Mammary epithelial cell (primary cell): ENCODE measurements at regions of chr3 and their contacts with region 1.

Region 1: GRCh38 chr3:180416111-180416594 is 185.8 kb upstream of the TTC14 start:
- DNase-seq: peak; percentile 92
- H3K4me3 ChIP-seq: no peak overlapping the region
- H3K27ac ChIP-seq: peak overlapping the region; percentile 89
- H3K4me1 ChIP-seq: peaks cover 52% of the 10 kb centered on the region
- H3K27me3 ChIP-seq: no peaks in the 10 kb centered on the region
- CTCF ChIP-seq: no peak

Region 2: DNA sequence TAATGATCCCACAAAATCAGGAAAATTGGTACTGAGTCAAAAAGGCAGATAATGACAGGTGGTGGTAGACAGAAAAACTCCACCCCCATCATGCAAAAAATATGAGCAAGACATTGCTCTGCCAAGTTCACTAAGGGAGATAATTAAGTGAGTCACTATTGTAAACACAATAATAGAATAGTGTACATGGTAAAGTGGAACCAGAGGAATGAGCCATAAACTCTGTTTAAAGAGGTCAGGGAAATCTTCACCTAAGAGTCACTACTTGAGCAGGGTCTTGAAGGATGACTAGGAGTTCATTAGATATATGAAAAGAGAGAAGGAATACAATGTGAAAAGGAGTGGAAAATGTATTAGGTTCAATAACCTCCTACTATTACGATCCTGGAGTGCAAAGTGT is 166.0 kb before region 1 on chr3:
- CTCF ChIA-PET with region 1: no interaction called
- dilution Hi-C with region 1: no loop called
- in situ Hi-C with region 1: no loop called
- intact Hi-C with region 1: loop called (anchors 10 kb)
- DNase-seq: peak; percentile 79
- H3K4me3 ChIP-seq: no peak overlapping the region
- H3K27ac ChIP-seq: no peak overlapping the region
- H3K4me1 ChIP-seq: peaks cover 48% of the 10 kb centered on the region
- H3K27me3 ChIP-seq: no peaks in the 10 kb centered on the region
- CTCF ChIP-seq: no peak

Region 3: GRCh38 chr3:180362081-180362480 is 54.1 kb before region 1 on chr3:
- CTCF ChIA-PET with region 1: no interaction called
- dilution Hi-C with region 1: loop called (anchors 5 kb)
- in situ Hi-C with region 1: no loop called
- intact Hi-C with region 1: no loop called
- DNase-seq: no peak
- H3K4me3 ChIP-seq: no peak overlapping the region
- H3K27ac ChIP-seq: no peak overlapping the region
- H3K4me1 ChIP-seq: peaks cover 13% of the 10 kb centered on the region
- H3K27me3 ChIP-seq: no peaks in the 10 kb centered on the region
- CTCF ChIP-seq: no peak

Region 4: GRCh38 chr3:180383332-180384020 is 32.7 kb before region 1 on chr3:
- CTCF ChIA-PET with region 1: no interaction called
- dilution Hi-C with region 1: no loop called
- in situ Hi-C with region 1: no loop called
- intact Hi-C with region 1: no loop called
- DNase-seq: peak; percentile 52
- H3K4me3 ChIP-seq: no peak overlapping the region
- H3K27ac ChIP-seq: peak overlapping the region; percentile 46
- H3K4me1 ChIP-seq: peaks cover 25% of the 10 kb centered on the region
- H3K27me3 ChIP-seq: no peaks in the 10 kb centered on the region
- CTCF ChIP-seq: no peak

Region 5: DNA sequence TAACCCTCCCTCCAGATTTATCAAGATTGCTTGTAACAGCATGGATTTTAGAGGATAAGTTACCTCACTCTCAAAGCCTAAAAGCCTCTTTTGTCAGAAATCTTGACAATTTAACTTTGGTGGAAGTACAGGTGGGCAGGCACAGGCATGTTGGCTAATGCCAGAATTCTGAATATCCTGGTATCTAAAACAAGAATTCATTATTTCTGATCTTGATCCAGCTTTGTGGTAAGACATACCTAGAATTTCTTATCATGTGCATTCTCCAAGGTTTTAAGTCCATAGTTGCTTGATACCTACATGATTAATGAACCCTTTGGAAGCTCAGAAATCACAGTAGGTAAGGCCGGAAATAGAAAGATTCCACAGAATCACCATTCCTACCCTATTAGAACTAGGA is 75.9 kb after region 1 on chr3:
- CTCF ChIA-PET with region 1: no interaction called
- dilution Hi-C with region 1: loop called (anchors 5 kb)
- in situ Hi-C with region 1: no loop called
- intact Hi-C with region 1: no loop called
- DNase-seq: peak; percentile 51
- H3K4me3 ChIP-seq: peak overlapping the region in 2 of 3 experiments; percentile 54 to 67
- H3K27ac ChIP-seq: peak overlapping the region; percentile 60
- H3K4me1 ChIP-seq: peaks cover 14% of the 10 kb centered on the region
- H3K27me3 ChIP-seq: no peaks in the 10 kb centered on the region
- CTCF ChIP-seq: no peak

Region 6: DNA sequence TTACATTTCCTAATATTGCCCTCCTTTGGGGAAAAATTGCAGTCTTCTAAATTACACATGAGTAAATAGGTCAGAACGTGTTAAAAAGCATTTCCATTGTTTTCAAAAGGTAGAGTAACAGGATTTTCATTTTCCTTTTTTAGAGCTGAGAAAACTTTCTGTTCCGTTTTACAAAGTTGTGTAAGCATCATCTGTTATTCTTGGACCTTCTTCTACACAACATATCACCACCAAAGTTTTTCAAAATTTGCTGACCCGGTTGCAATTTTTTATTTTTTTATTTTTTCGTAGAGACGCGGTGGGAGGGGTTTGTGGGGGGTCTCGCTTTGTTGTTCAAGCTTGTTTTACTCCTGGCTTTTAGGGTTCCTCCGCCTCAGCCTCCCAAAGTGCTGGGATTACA is 262.1 kb after region 1 on chr3:
- CTCF ChIA-PET with region 1: no interaction called
- dilution Hi-C with region 1: no loop called
- in situ Hi-C with region 1: no loop called
- intact Hi-C with region 1: no loop called
- DNase-seq: no peak
- H3K4me3 ChIP-seq: no peak overlapping the region
- H3K27ac ChIP-seq: no peak overlapping the region
- H3K4me1 ChIP-seq: peaks cover 7% of the 10 kb centered on the region
- H3K27me3 ChIP-seq: no peaks in the 10 kb centered on the region
- CTCF ChIP-seq: no peak